ENCODE measurements at regions of chr5 and their contacts with region 1.

Region 1: GRCh38 chr5:43484106-43484849 is 613 bp upstream of the TMEM267 start:
- DNase-seq: peak; percentile 85
- H3K4me3 Mint-ChIP-seq: peak overlapping the region; percentile 77
- H3K27ac Mint-ChIP-seq: peak overlapping the region; percentile 94
- H3K4me1 Mint-ChIP-seq: peaks cover 11% of the 10 kb centered on the region
- H3K27me3 Mint-ChIP-seq: no peaks in the 10 kb centered on the region
- CTCF ChIP-seq: peak; percentile 74

Region 2: DNA sequence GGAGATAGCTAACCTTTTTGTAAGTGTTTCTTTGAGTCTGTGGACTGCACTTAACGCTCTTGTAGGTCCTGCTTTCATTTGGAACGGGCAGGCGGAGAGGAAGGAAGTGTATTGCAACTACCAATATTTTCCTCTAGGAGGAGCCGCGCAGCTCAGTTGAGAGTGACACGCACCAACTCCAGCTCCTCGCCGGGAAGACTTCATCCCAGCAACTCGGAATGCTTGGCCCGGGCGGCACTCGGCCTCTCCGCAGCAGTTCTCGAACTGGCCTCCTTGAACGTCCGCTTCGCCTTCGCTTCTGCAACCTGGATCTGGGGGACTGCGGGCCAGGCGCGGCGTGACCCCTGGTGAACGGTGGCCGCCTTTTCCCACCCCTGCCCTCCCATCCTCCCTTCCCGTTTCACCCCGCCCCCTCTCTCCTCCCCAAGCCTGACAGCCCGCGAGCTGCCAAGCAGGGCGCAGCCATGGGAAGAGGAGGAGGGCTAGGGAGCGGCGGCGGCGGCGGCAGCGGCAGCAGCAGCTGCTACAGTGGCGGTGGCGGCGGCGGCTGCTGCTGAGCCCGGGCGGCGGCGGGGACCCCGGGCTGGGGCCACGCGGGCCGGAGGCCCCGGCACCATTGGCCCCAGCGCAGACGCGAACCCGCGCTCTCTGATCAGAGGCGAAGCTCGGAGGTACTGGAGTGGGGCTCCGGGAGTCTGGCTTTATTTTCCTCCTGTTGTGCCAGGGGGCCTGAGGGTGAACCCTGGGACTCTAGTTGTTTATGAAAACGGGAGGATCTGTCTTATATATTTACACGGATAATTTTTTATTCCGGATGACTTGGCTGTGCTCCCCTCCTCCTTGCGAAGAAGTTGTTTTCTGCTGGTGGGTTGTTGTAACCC is 1060.8 kb before region 1 on chr5 and contains the start of gene GHR:
- CTCF ChIA-PET with region 1: no interaction called
- POLR2A ChIA-PET with region 1: no interaction called
- intact Hi-C with region 1: no loop called
- DNase-seq: peak; percentile 93
- H3K4me3 Mint-ChIP-seq: no peak within 1 kb of the TSS
- H3K27ac Mint-ChIP-seq: no peak within 1 kb of the TSS
- H3K4me1 Mint-ChIP-seq: no peaks in the 10 kb centered on the region
- H3K27me3 Mint-ChIP-seq: no peaks in the 10 kb centered on the region
- CTCF ChIP-seq: peak; percentile 69
- total RNA-seq, gene GHR: 1.8 and 1.9 TPM in 2 replicates

Region 3: GRCh38 chr5:43078986-43079355 is 405.3 kb before region 1 on chr5:
- CTCF ChIA-PET with region 1: no interaction called
- POLR2A ChIA-PET with region 1: no interaction called
- intact Hi-C with region 1: no loop called
- DNase-seq: peak; percentile 54
- H3K4me3 Mint-ChIP-seq: no peak overlapping the region
- H3K27ac Mint-ChIP-seq: no peak overlapping the region
- H3K4me1 Mint-ChIP-seq: peaks cover 28% of the 10 kb centered on the region
- H3K27me3 Mint-ChIP-seq: no peaks in the 10 kb centered on the region
- CTCF ChIP-seq: no peak

Region 4: DNA sequence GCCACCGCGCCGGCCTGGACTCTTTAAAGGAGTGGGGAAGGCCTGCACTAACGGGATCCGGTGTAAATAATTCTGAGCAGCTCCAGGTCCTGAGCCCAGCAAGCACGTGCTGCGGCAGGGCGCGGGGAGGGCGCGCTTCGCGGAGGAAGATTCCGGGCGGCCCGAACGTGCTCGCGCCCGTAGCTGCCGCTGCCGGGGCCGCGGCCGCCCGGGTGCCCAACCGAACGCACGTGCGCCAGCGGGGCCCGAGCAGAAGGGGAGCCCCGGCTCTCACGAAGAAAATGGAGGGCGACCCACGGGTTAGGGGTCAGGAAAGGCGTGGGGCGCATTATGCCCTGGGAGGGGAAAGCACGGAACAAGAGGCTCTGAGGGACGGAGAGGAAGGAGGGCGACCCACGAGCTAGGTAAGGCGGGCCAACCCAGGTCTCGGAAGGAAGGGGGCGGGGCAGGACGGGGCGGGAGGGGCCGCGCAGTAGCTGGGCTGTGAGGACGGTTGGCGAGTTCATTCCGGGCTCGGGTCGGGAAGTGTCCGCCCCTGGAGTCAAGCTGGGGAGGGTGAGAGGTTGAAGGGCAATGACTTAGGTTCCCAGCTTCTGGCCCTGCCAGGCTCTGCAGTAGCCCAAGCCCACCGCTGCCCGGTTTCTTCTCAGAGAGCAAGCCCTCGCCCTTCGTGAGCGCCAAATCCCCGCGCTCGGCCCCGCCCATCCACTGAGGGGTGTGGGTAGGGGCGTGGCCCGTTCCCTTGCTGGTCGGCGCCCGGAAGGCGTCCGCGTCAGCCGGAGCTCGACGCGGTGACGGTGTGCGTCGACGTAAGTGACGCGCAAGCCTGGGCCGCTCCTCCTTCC is 363.3 kb before region 1 on chr5 and contains the start of gene ZNF131:
- CTCF ChIA-PET with region 1: interaction called, 10 read pairs
- POLR2A ChIA-PET with region 1: interaction called, 19 read pairs
- intact Hi-C with region 1: no loop called
- DNase-seq: peak; percentile 96
- H3K4me3 Mint-ChIP-seq: peak within 1 kb of the TSS; percentile 92
- H3K27ac Mint-ChIP-seq: peak within 1 kb of the TSS; percentile 90
- H3K4me1 Mint-ChIP-seq: peaks cover 5% of the 10 kb centered on the region
- H3K27me3 Mint-ChIP-seq: no peaks in the 10 kb centered on the region
- CTCF ChIP-seq: no peak
- total RNA-seq, gene ZNF131: 41.3 and 42.4 TPM in 2 replicates

Region 5: DNA sequence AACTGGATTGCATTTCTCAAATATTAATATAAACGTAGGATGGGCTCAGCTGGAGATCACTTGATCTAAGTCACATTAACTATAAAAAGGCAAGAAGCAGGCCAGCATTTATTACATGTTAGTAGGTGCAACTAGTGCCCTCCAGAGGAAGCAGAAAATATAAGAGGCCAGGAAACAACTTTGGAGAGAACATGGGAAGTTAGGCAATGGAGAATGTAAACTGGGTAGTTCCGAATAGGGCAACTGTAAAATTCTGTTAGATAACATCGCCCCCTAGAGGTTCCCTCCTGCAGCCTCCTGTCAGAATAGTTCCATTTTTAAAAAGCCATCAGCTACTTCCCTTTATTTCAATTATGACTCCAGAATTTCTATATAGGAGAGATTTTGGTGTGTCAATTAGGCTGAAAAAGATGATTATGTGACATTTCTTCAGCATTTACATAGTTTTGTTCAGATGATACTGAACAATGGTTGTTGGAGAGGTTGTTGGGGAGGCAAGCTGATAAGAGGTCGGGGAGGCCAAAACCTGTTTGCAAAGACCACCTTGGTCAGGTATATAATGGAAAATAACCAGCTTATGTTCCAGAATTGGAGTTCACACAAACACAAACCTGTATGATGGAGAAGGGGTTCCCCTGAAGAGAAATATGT is 94.5 kb before region 1 on chr5:
- CTCF ChIA-PET with region 1: interaction called, 35 read pairs
- POLR2A ChIA-PET with region 1: interaction called, 16 read pairs
- intact Hi-C with region 1: no loop called
- DNase-seq: peak; percentile 90
- H3K4me3 Mint-ChIP-seq: no peak overlapping the region
- H3K27ac Mint-ChIP-seq: no peak overlapping the region
- H3K4me1 Mint-ChIP-seq: no peaks in the 10 kb centered on the region
- H3K27me3 Mint-ChIP-seq: no peaks in the 10 kb centered on the region
- CTCF ChIP-seq: peak; percentile 78

Region 6: GRCh38 chr5:43422143-43422542 is 62.1 kb before region 1 on chr5:
- CTCF ChIA-PET with region 1: interaction called, 30 read pairs
- POLR2A ChIA-PET with region 1: interaction called, 113 read pairs
- intact Hi-C with region 1: no loop called
- DNase-seq: peak; percentile 91
- H3K4me3 Mint-ChIP-seq: peak overlapping the region; percentile 34
- H3K27ac Mint-ChIP-seq: peak overlapping the region; percentile 1
- H3K4me1 Mint-ChIP-seq: peaks cover 32% of the 10 kb centered on the region
- H3K27me3 Mint-ChIP-seq: no peaks in the 10 kb centered on the region
- CTCF ChIP-seq: no peak

Region 7: DNA sequence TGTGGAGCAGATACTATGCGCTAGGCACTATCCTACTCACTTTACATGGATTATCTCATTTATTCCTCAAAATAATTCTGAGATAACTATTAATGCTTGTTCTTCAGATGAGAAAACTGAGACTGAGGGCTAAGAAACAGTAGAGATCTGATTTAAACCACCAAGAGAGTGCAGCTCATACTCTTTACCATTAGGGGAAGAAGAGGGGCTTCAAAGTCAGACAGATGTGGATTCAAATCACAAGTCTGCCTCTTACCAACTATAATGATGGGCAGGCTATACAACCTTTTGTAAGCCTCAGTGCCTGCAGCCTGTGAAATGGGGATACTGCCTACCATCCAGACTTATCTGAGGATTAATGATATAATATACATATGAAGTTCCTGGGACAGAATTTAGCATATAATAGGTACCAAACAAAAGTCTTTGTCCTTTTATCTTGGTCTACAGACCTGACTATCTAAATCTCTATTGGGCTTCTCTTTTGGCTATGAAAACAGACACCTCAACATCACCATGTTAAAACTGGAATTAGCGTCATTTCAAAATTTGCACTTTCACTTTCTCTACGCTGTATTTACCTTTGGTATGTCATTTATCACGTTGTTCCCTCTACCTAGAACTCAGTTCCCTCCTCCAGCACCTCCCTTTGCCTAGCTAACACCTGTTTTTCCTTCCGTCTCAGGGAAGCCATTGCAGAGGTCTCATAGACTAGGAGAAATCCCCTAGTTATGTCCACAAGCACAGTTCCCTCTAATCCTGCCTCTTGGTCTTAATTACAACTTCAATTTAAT is 13.2 kb after region 1 on chr5:
- CTCF ChIA-PET with region 1: interaction called, 14 read pairs
- POLR2A ChIA-PET with region 1: interaction called, 11 read pairs
- intact Hi-C with region 1: no loop called
- DNase-seq: no peak
- H3K4me3 Mint-ChIP-seq: no peak overlapping the region
- H3K27ac Mint-ChIP-seq: no peak overlapping the region
- H3K4me1 Mint-ChIP-seq: no peaks in the 10 kb centered on the region
- H3K27me3 Mint-ChIP-seq: no peaks in the 10 kb centered on the region
- CTCF ChIP-seq: no peak

Region 8: DNA sequence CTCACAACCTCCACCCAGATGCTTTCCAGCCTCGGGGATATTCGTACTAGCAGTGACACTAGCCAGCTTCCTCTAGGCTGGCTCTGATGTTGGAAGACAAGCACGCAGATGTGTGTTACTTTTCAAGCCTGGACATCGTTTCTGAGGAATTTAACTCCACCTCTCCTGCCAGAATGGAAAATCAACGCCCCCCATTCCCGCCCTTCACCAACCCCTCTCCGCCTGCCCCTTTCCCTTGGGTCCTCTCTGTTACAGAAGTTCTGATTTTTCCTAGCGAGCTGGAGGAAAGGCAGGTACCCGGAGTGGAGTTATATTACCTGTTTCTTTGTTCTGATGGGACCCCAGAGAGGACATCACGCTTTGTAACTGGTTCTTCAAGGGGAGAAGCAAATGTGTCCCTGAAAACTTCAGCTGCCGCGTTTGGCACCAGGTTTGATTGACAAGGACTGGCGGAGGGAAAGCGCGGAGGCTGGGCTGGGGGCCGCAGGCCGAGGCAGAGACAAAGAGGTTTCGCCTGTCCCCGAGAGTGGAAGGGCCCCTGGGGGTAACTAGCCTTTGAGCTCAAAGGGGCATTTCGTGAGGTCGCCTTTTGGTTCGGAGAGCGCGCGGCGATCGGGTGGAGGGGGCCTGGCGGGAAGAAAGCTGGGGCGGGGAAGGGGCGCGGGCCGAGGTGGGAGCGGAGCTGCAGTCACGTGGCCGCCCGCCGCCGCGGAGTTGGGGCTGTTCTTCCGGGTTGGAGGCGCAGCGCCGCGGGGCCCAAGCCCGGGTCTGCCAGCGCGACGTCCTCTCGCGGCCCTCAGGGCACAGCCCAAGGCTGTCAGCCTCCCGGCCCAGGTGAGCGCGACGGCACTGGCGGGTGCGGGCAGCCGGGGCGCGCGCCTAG is 118.4 kb after region 1 on chr5 and contains the start of gene NNT:
- CTCF ChIA-PET with region 1: no interaction called
- POLR2A ChIA-PET with region 1: interaction called, 23 read pairs
- intact Hi-C with region 1: no loop called
- DNase-seq: peak; percentile 60
- H3K4me3 Mint-ChIP-seq: peak within 1 kb of the TSS; percentile 83
- H3K27ac Mint-ChIP-seq: peak within 1 kb of the TSS; percentile 99
- H3K4me1 Mint-ChIP-seq: peaks cover 11% of the 10 kb centered on the region
- H3K27me3 Mint-ChIP-seq: no peaks in the 10 kb centered on the region
- CTCF ChIP-seq: no peak
- total RNA-seq, gene NNT: 38.4 and 52.3 TPM in 2 replicates

Region 9: GRCh38 chr5:43649256-43649655 is 165.0 kb after region 1 on chr5:
- CTCF ChIA-PET with region 1: no interaction called
- POLR2A ChIA-PET with region 1: no interaction called
- intact Hi-C with region 1: no loop called
- DNase-seq: no peak
- H3K4me3 Mint-ChIP-seq: no peak overlapping the region
- H3K27ac Mint-ChIP-seq: no peak overlapping the region
- H3K4me1 Mint-ChIP-seq: no peaks in the 10 kb centered on the region
- H3K27me3 Mint-ChIP-seq: no peaks in the 10 kb centered on the region
- CTCF ChIP-seq: no peak